ENCODE measurements at regions of chr1 and their contacts with region 1.

Region 1: DNA sequence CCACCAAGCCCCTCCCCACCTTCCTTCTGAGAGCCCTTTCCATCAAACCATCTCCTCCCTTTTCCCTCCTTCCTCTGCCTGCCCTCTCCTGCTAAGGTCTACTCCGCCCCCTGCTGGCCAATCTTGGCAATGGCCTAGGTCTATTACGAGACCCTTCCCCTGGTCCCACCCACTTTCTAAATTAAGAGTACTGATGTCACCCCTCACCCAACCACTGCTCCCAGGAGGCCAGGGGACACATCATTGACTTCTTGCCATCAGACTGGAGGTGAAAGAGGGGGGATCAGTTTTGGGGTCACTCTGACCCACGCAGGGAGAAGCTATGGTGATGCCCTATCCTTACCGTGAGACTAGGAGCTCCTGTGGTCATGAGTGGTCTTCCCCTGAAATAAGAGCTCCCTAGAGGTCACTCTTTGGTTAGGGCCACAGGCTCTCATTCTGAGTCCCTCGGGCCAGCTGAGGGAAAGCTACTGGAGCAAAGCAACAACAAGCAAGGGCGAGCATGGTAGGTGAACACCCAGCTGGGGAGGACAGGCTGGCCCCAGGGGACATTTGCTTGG is 34.6 kb upstream of the S100A7 start:
- DNase-seq: peak; percentile 27
- H3K4me3 ChIP-seq: no peak overlapping the region
- H3K27ac ChIP-seq: no peak overlapping the region
- H3K4me1 ChIP-seq: no peaks in the 10 kb centered on the region
- H3K27me3 ChIP-seq: no peaks in the 10 kb centered on the region
- CTCF ChIP-seq: peak; percentile 75 to 92 (median 84)
- POLR2A ChIP-seq: no peak

Region 2: DNA sequence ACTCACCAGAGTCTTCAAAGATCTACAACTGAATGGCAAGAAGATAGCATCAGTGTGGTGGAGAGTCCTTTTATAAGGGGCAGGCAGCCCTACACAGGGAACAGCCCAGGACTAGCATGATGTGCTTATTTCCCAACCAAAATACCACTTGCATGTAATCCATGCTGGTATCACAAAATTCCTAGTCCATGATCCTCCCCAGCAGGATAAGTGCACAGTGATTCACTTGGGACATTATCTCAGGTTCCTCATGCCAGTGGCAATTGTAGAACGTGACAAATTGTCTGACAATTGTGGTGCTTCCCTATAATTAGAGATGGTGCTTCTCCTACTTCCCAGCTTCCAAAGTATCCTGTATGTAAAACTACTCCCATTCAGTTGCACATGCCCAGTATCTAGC is 344.2 kb before region 1 on chr1 and contains the start of gene SPRR2G:
- intact Hi-C with region 1: no loop called
- DNase-seq: no peak
- H3K4me3 ChIP-seq: no peak within 1 kb of the TSS
- H3K27ac ChIP-seq: no peak within 1 kb of the TSS
- H3K4me1 ChIP-seq: no peaks in the 10 kb centered on the region
- H3K27me3 ChIP-seq: no peaks in the 10 kb centered on the region
- CTCF ChIP-seq: no peak
- POLR2A ChIP-seq: no peak
- total RNA-seq, gene SPRR2G: not detected

Region 3: GRCh38 chr1:153352523-153352922 is 142.5 kb before region 1 on chr1:
- intact Hi-C with region 1: loop called (anchors 1 kb)
- DNase-seq: peak; percentile 57
- H3K4me3 ChIP-seq: no peak overlapping the region
- H3K27ac ChIP-seq: no peak overlapping the region
- H3K4me1 ChIP-seq: no peaks in the 10 kb centered on the region
- H3K27me3 ChIP-seq: no peaks in the 10 kb centered on the region
- CTCF ChIP-seq: peak; percentile 69 to 85 (median 82)
- POLR2A ChIP-seq: no peak

Measured in prostate gland (tissue), 2 donors.